HepG2 (cell line): ENCODE measurements at regions of chr7 and their contacts with region 1.

Region 1: GRCh38 chr7:96174812-96175211 is 147.1 kb downstream of the SLC25A13 start:
- DNase-seq: peak; percentile 54
- ATAC-seq: peak; percentile 87
- H3K4me3 ChIP-seq: no peak overlapping the region
- H3K27ac ChIP-seq: no peak overlapping the region
- H3K4me1 ChIP-seq: peaks cover 27% of the 10 kb centered on the region
- H3K27me3 ChIP-seq: no peaks in the 10 kb centered on the region
- CTCF ChIP-seq: peak; percentile 37
- EP300 ChIP-seq: 0 out of 4 replicates have a peak, but pooled peaks of 1 of the 2 experiments have one; percentile 5
- POLR2A ChIP-seq: no peak
- RAD21 ChIP-seq: no peak

Region 2: DNA sequence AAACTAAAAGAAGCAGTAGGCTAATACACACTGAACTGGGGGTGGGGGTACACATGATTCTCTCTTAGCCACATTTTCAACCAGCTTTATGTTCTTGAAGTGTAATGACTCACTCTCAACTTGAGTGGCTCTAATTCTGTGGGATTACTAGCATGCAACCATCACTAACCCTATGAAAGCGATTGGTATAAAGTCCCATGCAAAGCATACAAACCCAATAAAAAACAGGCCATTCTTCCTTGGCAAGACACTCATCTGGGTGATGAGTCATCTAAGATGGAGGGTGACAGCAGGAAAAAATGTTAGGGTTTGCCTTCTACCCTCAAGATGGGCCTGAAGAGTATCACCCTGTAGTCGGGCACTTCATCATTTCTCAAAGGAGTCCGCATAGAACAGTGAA is 763.8 kb before region 1 on chr7:
- CTCF ChIA-PET with region 1: no interaction called
- POLR2A ChIA-PET with region 1: no interaction called
- in situ Hi-C with region 1: no loop called
- intact Hi-C with region 1: no loop called
- DNase-seq: no peak
- ATAC-seq: no peak
- H3K4me3 ChIP-seq: no peak overlapping the region
- H3K27ac ChIP-seq: no peak overlapping the region
- H3K4me1 ChIP-seq: peaks cover 15% of the 10 kb centered on the region
- H3K27me3 ChIP-seq: no peaks in the 10 kb centered on the region
- CTCF ChIP-seq: no peak
- EP300 ChIP-seq: no peak
- POLR2A ChIP-seq: no peak
- RAD21 ChIP-seq: no peak

Region 3: DNA sequence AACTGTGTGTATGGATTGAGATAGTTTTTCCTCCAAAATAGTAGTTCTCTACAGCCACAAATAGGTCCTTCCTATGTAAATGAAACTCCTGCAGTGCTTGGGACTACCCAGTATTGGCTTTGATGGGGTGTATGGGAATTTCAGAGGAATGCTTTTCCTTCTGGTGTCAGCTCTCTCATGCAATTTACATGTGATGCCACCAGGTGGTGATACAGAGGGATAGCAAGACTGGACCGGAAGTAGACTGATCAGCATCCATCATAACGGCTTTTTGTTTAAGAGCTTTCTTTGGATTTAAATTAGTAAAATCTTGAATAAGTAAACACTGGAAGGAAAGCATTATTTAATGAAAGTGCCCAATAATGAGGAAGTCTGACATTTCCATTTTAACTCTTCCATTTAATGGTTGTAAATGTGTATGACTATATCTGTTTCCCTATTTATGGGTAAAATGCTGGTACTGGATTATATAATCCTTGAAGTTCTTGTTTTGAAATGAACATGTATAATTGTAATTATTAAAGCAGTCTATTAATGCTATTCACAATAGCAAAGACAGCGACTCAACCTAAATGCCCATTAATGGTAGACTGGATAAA is 379.8 kb before region 1 on chr7:
- CTCF ChIA-PET with region 1: no interaction called
- POLR2A ChIA-PET with region 1: no interaction called
- in situ Hi-C with region 1: no loop called
- intact Hi-C with region 1: no loop called
- DNase-seq: peak; percentile 24
- ATAC-seq: peak; percentile 62; the same call in 2 of the 3 replicates
- H3K4me3 ChIP-seq: no peak overlapping the region
- H3K27ac ChIP-seq: no peak overlapping the region
- H3K4me1 ChIP-seq: no peaks in the 10 kb centered on the region
- H3K27me3 ChIP-seq: no peaks in the 10 kb centered on the region
- CTCF ChIP-seq: peak; percentile 50
- EP300 ChIP-seq: no peak
- POLR2A ChIP-seq: no peak
- RAD21 ChIP-seq: no peak

Region 4: GRCh38 chr7:96127746-96128145 is 47.1 kb before region 1 on chr7:
- CTCF ChIA-PET with region 1: no interaction called
- POLR2A ChIA-PET with region 1: interaction called, 3 read pairs
- in situ Hi-C with region 1: no loop called
- intact Hi-C with region 1: loop called (anchors 2 kb)
- DNase-seq: no peak
- ATAC-seq: no peak
- H3K4me3 ChIP-seq: no peak overlapping the region
- H3K27ac ChIP-seq: no peak overlapping the region
- H3K4me1 ChIP-seq: peaks cover 22% of the 10 kb centered on the region
- H3K27me3 ChIP-seq: no peaks in the 10 kb centered on the region
- CTCF ChIP-seq: no peak
- EP300 ChIP-seq: no peak
- POLR2A ChIP-seq: no peak
- RAD21 ChIP-seq: no peak